CD8-positive, alpha-beta memory T cell (primary cell): ENCODE measurements at regions of chr15 and their contacts with region 1.

Region 1: GRCh38 chr15:90286678-90287077 is 21.2 kb downstream of the NGRN start:
- DNase-seq: peak in 4 of 5 donors; percentile 24 to 62 (median 52)
- H3K4me3 ChIP-seq: no peak overlapping the region
- H3K4me3 Mint-ChIP-seq: no peak overlapping the region
- H3K27ac ChIP-seq: no peak overlapping the region
- H3K27ac Mint-ChIP-seq: no peak overlapping the region
- H3K4me1 ChIP-seq: no peaks in the 10 kb centered on the region
- H3K4me1 Mint-ChIP-seq: peaks cover 0 to 4% (median 0%) of the 10 kb centered on the region in 3 donors
- H3K27me3 ChIP-seq: no peaks in the 10 kb centered on the region
- H3K27me3 Mint-ChIP-seq: no peaks in the 10 kb centered on the region

Region 2: DNA sequence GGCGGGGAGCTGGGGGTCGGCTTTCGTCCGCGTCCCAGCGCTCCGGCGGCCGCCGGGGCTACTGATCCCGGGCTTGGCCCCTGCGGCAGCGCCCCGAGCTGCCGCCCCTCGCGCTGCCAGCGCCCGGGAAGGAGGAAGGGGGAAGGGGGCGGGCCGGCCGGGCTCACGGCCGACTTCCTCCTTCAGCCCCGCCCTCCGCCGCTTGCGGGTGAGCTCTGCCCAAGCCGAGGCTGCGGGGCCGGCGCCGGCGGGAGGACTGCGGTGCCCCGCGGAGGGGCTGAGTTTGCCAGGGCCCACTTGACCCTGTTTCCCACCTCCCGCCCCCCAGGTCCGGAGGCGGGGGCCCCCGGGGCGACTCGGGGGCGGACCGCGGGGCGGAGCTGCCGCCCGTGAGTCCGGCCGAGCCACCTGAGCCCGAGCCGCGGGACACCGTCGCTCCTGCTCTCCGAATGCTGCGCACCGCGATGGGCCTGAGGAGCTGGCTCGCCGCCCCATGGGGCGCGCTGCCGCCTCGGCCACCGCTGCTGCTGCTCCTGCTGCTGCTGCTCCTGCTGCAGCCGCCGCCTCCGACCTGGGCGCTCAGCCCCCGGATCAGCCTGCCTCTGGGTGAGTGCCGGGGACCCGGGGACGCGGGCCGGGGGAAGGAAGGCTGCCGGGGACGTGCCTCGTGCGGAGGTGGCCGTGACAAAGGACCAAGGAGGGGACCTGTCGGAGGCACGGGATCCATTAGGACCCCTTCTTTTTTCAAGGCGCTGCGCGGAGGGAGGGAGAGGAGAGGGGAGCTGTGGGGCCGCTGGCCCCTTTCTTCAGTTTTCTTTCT is 85.3 kb before region 1 on chr15 and contains the start of gene SEMA4B:
- CTCF ChIA-PET with region 1: no interaction called
- POLR2A ChIA-PET with region 1: interaction called, 17 read pairs
- DNase-seq: peak; percentile 65 to 81 (median 73)
- H3K4me3 ChIP-seq: peak within 1 kb of the TSS; percentile 74
- H3K4me3 Mint-ChIP-seq: peak within 1 kb of the TSS; percentile 82 to 96 (median 88)
- H3K27ac ChIP-seq: peak within 1 kb of the TSS; percentile 57
- H3K27ac Mint-ChIP-seq: peak within 1 kb of the TSS; percentile 60 to 97 (median 88)
- H3K4me1 ChIP-seq: peaks cover 24% of the 10 kb centered on the region
- H3K4me1 Mint-ChIP-seq: peaks cover 15 to 30% (median 23%) of the 10 kb centered on the region in 3 donors
- H3K27me3 ChIP-seq: no peaks in the 10 kb centered on the region
- H3K27me3 Mint-ChIP-seq: no peaks in the 10 kb centered on the region
- total RNA-seq, gene SEMA4B: 6.9 to 8.8 TPM

Region 3: GRCh38 chr15:90241343-90242192 is 45.1 kb before region 1 on chr15:
- CTCF ChIA-PET with region 1: no interaction called
- POLR2A ChIA-PET with region 1: no interaction called
- DNase-seq: no peak
- H3K4me3 ChIP-seq: no peak overlapping the region
- H3K4me3 Mint-ChIP-seq: no peak overlapping the region
- H3K27ac ChIP-seq: no peak overlapping the region
- H3K27ac Mint-ChIP-seq: no peak overlapping the region
- H3K4me1 ChIP-seq: no peaks in the 10 kb centered on the region
- H3K4me1 Mint-ChIP-seq: peaks cover 3 to 12% (median 5%) of the 10 kb centered on the region in 3 donors
- H3K27me3 ChIP-seq: no peaks in the 10 kb centered on the region
- H3K27me3 Mint-ChIP-seq: no peaks in the 10 kb centered on the region